ENCODE measurements at regions of chr16 and their contacts with region 1.

Region 1: DNA sequence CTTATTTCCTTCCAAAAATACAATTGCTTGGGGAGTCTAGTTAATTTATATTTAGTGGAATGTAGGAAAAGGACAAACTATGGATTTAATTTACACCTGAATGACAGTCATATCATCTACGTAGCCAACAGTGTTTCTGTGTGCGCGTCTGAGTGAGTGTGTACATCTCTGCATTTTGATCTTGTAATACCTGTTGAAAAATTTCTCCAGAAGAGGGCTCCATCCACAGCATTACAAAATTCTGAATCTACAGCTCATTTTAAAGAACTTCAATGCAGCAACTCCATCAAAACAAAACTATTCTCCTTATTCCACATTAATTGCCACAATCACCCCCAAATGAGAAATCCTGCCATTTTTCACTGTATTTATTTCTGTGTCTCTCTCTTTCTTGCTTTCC is 3.9 kb downstream of the CDH13 start:
- DNase-seq: no peak
- H3K4me3 Mint-ChIP-seq: no peak overlapping the region
- H3K27ac Mint-ChIP-seq: no peak overlapping the region
- H3K4me1 Mint-ChIP-seq: peaks cover 9% of the 10 kb centered on the region
- H3K27me3 Mint-ChIP-seq: peaks cover 57% of the 10 kb centered on the region

Region 2: GRCh38 chr16:82488460-82488859 is 142.2 kb before region 1 on chr16:
- CTCF ChIA-PET with region 1: no interaction called
- POLR2A ChIA-PET with region 1: no interaction called
- DNase-seq: no peak
- H3K4me3 Mint-ChIP-seq: no peak overlapping the region
- H3K27ac Mint-ChIP-seq: no peak overlapping the region
- H3K4me1 Mint-ChIP-seq: no peaks in the 10 kb centered on the region
- H3K27me3 Mint-ChIP-seq: peaks cover 6% of the 10 kb centered on the region

Region 3: DNA sequence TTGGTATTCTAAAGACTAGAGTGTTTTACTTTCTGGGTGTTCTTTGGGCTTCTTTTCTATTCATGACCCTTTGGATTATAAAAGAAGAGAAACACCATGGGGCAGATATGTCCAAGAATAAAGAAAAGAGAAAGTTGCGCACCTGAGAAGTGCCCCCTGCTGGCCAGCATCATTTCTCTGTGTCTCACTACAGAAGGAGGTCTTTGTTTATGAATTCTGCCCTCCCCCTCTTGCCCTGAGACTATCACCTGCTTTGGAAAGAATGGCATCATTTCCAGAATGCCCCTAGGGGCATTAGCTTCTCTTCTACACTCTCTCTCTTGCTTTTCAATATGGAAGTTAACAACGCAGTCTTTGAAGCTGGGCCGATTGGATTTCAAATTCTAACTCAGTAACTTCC is 41.1 kb after region 1 on chr16:
- CTCF ChIA-PET with region 1: interaction called, 12 read pairs
- POLR2A ChIA-PET with region 1: no interaction called
- DNase-seq: peak; percentile 41
- H3K4me3 Mint-ChIP-seq: no peak overlapping the region
- H3K27ac Mint-ChIP-seq: no peak overlapping the region
- H3K4me1 Mint-ChIP-seq: no peaks in the 10 kb centered on the region
- H3K27me3 Mint-ChIP-seq: peaks cover 3% of the 10 kb centered on the region

Region 4: DNA sequence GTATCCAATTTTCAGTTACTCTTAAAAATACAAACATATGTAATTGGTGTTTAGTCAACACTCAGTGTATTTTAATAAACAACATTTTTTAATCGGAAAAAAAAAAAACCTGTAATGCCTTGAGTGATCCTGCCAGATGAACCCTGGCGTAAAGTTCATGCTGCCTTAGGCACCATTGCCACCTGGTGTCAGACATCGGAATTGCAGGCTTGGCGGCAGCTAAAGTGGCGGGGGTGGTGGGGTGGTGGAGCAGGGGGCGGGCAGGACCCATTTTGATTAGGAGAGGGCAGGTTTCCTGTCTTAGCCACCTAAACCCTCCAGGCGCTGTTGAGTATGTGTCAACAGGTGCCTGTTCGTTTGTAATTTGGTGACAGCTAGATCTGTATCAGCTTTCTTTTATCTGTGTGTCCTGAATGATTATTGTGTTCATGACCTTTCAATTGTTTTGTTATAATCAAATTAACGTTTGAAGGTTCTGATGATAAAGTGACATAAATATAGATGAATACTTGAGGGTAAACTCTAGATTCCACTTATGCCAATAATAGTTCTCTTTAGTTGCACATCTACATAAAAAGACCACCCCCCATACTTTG is 584.8 kb after region 1 on chr16:
- CTCF ChIA-PET with region 1: interaction called, 13 read pairs
- POLR2A ChIA-PET with region 1: no interaction called
- DNase-seq: peak; percentile 56
- H3K4me3 Mint-ChIP-seq: no peak overlapping the region
- H3K27ac Mint-ChIP-seq: no peak overlapping the region
- H3K4me1 Mint-ChIP-seq: no peaks in the 10 kb centered on the region
- H3K27me3 Mint-ChIP-seq: no peaks in the 10 kb centered on the region

Measured in activated CD4-positive, alpha-beta memory T cell treated with anti-CD3 and anti-CD28 coated beads, Interleukin-2, amount 10 ng/mL, durations not matched to agents 7 days and 5 days (primary cell).